Heart right ventricle (tissue), 16 donors: ENCODE measurements at regions of chr12 and their contacts with region 1.

Region 1: GRCh38 chr12:93868771-93869170 is 191.6 kb downstream of the CRADD start:
- DNase-seq: peak in 1 of 2 donors; percentile 41
- ATAC-seq: peak; percentile 59 to 91 (median 85)
- H3K4me3 ChIP-seq: no peak overlapping the region
- H3K27ac ChIP-seq: peak overlapping the region in 3 of 10 donors; percentile 7 to 49 (median 11)
- H3K4me1 ChIP-seq: peaks cover 0 to 6% (median 0%) of the 10 kb centered on the region in 9 donors
- H3K27me3 ChIP-seq: no peaks in the 10 kb centered on the region
- CTCF ChIP-seq: no peak

Region 2: DNA sequence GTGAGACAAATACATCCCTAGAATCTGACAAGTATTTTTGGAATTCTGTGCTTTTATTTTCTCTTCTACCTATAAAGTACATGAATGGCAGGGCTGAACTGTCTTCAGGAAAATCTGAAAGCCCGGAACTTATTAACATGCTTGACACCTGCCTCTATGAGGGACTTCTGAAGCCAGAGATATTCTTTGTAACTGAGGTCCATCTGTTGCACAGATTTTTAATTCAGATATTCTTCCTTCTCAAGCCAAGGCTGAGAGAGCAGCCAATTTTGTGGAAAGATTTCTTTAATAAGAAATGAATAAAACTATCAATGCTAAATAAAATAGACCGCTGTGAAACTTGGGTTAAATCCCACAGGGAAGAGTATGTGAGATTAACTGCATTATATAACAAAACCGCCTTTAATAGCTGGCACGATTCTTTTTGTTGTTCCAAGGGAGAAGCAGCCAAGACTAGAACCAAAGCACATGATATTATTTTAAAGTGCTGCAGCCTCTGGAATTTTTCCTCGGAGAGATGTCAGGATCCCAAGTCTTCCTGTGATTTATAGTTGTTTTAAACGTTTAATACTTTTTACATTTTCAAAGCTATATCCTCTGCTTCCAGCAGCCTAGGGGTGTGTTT is 42.7 kb before region 1 on chr12:
- intact Hi-C with region 1: loop called in 1 of 10 experiments (anchors 5 kb)
- DNase-seq: no peak
- ATAC-seq: peak in 4 of 8 donors; percentile 26 to 56 (median 33)
- H3K4me3 ChIP-seq: peak overlapping the region in 1 of 10 donors; percentile 7
- H3K27ac ChIP-seq: peak overlapping the region; percentile 9 to 75 (median 52)
- H3K4me1 ChIP-seq: peaks cover 20 to 79% (median 51%) of the 10 kb centered on the region in 9 donors
- H3K27me3 ChIP-seq: no peaks in the 10 kb centered on the region
- CTCF ChIP-seq: no peak

Region 3: DNA sequence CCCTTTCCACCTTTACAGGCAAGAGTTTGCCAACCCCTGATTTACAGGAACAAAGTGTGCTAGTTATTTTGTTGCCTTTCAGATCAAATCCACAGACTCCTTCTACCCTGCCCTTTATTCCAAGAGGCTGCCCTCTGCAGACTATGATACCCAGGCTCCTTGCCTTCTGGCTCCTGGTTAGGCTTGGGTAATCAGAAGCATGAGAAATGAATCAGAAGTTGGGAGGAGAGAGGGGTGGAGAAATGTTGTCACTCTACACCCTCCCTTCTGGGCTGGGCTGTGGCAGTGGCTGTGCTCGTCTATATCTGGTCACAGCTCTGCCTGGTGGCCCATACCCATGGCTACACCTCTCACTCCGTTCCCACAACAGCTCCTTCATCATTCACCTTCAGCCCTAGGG is 75.0 kb after region 1 on chr12:
- intact Hi-C with region 1: no loop called
- DNase-seq: no peak
- ATAC-seq: peak in 5 of 8 donors; percentile 38 to 95 (median 81)
- H3K4me3 ChIP-seq: no peak overlapping the region
- H3K27ac ChIP-seq: no peak overlapping the region
- H3K4me1 ChIP-seq: no peaks in the 10 kb centered on the region
- H3K27me3 ChIP-seq: no peaks in the 10 kb centered on the region
- CTCF ChIP-seq: no peak